CD4-positive, alpha-beta T cell (primary cell): ENCODE measurements at regions of chr4 and their contacts with region 1.

Region 1: DNA sequence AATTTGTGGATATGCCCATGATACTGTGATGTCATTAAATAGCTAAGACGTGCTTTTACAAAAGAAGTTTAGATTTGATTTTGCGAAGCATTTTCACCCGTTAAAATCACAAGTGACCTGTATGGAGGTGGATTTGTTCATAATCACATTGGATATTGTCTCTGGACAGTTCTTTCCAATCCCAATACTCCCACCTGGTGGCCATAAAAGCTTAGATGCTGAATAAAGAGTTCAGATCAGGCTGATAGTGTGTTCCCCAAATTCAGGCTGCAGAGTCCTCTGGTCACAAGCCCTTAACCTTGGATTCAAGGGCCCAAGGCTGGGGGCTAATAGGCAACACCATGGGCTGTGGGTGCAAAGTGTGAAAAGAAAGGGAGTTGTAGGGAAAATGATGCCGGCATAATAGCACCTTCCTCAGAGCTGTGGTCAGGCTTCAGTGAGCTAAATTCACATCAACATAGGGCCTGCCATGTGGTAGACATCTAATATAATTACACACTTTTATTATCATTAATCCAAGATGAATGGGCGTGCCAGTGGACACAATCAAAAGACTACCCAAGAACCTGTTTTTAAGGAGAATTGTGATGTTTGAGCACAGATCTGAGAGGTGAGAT is 28.1 kb downstream of the SMIM43 start:
- DNase-seq: peak in 4 of 14 experiments; percentile 11 to 35 (median 33)
- ATAC-seq: no peak
- H3K4me3 ChIP-seq: no peak overlapping the region
- H3K4me3 Mint-ChIP-seq: no peak overlapping the region
- H3K27ac ChIP-seq: no peak overlapping the region
- H3K27ac Mint-ChIP-seq: no peak overlapping the region
- H3K4me1 ChIP-seq: no peaks in the 10 kb centered on the region
- H3K4me1 Mint-ChIP-seq: no peaks in the 10 kb centered on the region
- H3K27me3 ChIP-seq: peaks cover 0 to 2% of the 10 kb centered on the region in 2 experiments
- H3K27me3 Mint-ChIP-seq: peaks cover 26% of the 10 kb centered on the region
- CTCF ChIP-seq: peak; percentile 34

Region 2: GRCh38 chr4:121462660-121463261 is 274.1 kb before region 1 on chr4:
- CTCF ChIA-PET with region 1: no interaction called
- POLR2A ChIA-PET with region 1: no interaction called
- intact Hi-C with region 1: loop called in 1 of 2 experiments (anchors 5 kb)
- DNase-seq: peak in 7 of 14 experiments; percentile 7 to 58 (median 34)
- ATAC-seq: peak; percentile 49
- H3K4me3 ChIP-seq: no peak overlapping the region
- H3K4me3 Mint-ChIP-seq: no peak overlapping the region
- H3K27ac ChIP-seq: no peak overlapping the region
- H3K27ac Mint-ChIP-seq: no peak overlapping the region
- H3K4me1 ChIP-seq: no peaks in the 10 kb centered on the region
- H3K4me1 Mint-ChIP-seq: no peaks in the 10 kb centered on the region
- H3K27me3 ChIP-seq: peaks cover 0 to 18% of the 10 kb centered on the region in 2 experiments
- H3K27me3 Mint-ChIP-seq: peaks cover 27% of the 10 kb centered on the region
- CTCF ChIP-seq: peak; percentile 27